ENCODE measurements at regions of chrX and their contacts with region 1.

Region 1: DNA sequence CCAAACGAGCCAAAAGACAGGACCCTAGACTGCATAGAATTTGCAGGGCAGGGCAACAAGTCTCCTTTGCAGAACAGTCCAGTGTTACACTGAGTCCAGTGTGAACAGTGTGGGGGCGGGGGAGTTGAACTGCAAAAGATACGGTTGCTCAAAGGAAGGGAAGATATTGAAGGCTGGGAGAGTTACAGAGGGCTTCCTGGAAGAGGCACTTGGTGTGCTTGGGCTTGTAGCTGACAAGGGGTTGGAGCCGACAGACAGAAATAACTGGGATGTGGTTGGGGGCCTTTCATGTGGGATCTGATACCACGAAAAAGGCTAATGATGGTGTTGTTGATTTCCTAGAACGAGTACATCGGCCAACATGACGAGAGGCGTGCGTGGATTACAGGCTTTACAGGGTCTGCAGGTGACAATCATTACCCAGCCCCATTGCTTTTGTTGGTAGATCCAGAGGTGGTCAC is 6.1 kb downstream of the XPNPEP2 start:
- DNase-seq: no peak
- ATAC-seq: no peak

Region 2: DNA sequence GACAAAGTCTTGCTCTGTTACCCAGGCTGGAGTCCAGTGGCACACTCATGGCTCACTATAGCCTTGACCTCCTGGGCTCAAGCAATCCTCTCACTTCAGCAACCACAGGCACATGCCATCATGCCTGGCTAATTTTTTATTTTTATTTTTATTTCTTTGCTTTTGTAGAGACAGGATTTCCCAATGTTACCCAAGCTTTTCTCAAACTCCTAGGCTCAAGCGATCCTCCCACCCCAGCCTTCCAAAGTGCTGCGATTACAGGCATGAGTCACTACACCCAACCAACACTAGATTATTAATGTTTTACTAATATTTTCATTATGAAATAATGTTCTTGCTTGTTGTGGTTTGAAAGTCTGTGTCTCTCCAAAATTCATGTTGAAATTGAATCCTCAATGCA is 1687.5 kb before region 1 on chrX:
- intact Hi-C with region 1: no loop called
- DNase-seq: no peak
- ATAC-seq: no peak

Region 3: GRCh38 chrX:129493643-129494042 is 251.2 kb before region 1 on chrX:
- intact Hi-C with region 1: no loop called
- DNase-seq: no peak
- ATAC-seq: no peak

Region 4: GRCh38 chrX:129701624-129702069 is 43.2 kb before region 1 on chrX:
- intact Hi-C with region 1: no loop called
- DNase-seq: peak; percentile 83
- ATAC-seq: peak; percentile 93

Region 5: GRCh38 chrX:129793604-129794191 is 48.8 kb after region 1 on chrX:
- intact Hi-C with region 1: loop called (anchors 1 kb)
- DNase-seq: peak; percentile 52
- ATAC-seq: no peak

Region 6: GRCh38 chrX:129872524-129872923 is 127.6 kb after region 1 on chrX:
- intact Hi-C with region 1: no loop called
- DNase-seq: no peak
- ATAC-seq: no peak

Measured in sciatic nerve (tissue), 2 donors.